Activated naive CD4-positive, alpha-beta T cell treated with anti-CD3 and anti-CD28 coated beads for 36 hours (primary cell): ENCODE measurements at regions of chr22 and their contacts with region 1.

Region 1: DNA sequence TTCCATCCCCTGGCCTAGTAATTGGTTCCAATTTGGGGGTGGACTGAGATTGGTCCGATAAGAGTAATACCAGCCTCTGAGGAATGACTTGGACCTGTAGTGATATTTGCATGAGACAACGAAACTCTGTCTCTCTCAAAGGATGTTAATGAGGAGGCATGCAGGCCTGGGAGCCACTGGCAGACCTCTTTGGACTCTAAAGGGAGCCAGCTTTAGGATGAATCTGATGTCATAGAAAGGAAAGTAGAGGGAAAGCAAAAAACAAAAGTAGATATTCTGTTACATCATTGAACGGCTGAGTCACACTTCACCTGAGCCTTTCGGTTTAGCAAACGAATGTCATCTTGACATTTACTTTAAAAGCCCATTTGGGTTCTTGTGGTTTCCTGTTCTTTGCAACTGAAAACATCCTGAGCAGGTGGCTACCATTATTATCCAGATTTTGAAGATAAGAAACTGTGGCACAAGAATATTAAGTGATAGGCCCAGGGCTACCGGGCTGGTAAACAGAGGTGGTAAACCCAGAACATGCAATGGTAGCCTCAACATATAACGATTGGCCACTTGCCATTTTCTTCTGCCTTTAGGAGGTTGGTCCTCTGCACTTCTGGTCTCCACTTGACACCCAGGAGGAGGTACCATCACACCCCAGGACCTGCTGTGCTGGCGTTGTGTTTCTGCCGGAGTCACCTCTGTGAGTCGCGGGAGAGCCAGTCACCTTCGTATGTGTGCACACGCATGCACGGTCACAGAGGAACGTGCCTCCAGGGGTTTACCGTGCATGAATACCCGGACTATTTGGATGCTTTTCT is 42.7 kb downstream of the RTL6 start:
- DNase-seq: peak; percentile 57
- H3K4me3 Mint-ChIP-seq: peak overlapping the region; percentile 27
- H3K27ac Mint-ChIP-seq: peak overlapping the region; percentile 80
- H3K4me1 Mint-ChIP-seq: peaks cover 27% of the 10 kb centered on the region
- H3K27me3 Mint-ChIP-seq: no peaks in the 10 kb centered on the region

Region 2: GRCh38 chr22:44107340-44107739 is 348.0 kb before region 1 on chr22:
- CTCF ChIA-PET with region 1: no interaction called
- intact Hi-C with region 1: no loop called
- DNase-seq: peak; percentile 11
- H3K4me3 Mint-ChIP-seq: no peak overlapping the region
- H3K27ac Mint-ChIP-seq: no peak overlapping the region
- H3K4me1 Mint-ChIP-seq: no peaks in the 10 kb centered on the region
- H3K27me3 Mint-ChIP-seq: no peaks in the 10 kb centered on the region

Region 3: DNA sequence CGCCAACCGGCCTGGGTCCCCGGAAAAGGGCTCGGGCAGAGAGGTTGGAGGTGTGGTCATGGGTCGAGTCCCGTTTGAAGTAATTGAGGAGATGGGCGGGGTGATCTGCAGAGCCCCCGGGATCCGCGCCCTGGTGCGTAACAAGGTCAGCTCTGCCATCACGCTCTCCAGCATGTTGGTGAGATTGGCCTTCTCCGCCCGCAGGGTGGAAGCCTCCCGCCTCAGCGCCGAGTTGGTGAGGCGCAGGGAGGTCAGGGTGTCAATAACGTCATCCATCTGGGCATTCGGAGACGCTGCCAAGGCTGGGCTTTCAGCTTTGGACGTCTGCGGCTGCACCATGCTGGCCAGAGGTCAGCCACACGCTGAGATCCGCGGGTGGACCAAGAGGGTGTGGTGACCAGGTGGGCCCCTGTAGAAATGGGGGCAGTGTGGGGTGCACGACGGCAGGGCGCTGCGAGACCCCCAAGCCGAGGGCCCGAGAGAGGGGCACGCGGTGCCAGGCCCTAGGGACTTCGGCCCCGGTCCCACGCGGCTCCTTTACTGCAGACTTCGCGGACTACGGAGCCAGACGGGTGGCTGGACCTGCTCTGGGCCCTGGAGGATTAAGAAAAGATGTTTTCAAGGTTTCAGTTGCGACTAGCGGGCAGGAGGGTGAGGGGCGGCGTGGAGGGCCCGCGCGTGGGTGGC is 42.0 kb after region 1 on chr22:
- CTCF ChIA-PET with region 1: no interaction called
- intact Hi-C with region 1: loop called (anchors 1 kb)
- DNase-seq: no peak
- H3K4me3 Mint-ChIP-seq: peak overlapping the region; percentile 69
- H3K27ac Mint-ChIP-seq: no peak overlapping the region
- H3K4me1 Mint-ChIP-seq: peaks cover 24% of the 10 kb centered on the region
- H3K27me3 Mint-ChIP-seq: no peaks in the 10 kb centered on the region

Region 4: DNA sequence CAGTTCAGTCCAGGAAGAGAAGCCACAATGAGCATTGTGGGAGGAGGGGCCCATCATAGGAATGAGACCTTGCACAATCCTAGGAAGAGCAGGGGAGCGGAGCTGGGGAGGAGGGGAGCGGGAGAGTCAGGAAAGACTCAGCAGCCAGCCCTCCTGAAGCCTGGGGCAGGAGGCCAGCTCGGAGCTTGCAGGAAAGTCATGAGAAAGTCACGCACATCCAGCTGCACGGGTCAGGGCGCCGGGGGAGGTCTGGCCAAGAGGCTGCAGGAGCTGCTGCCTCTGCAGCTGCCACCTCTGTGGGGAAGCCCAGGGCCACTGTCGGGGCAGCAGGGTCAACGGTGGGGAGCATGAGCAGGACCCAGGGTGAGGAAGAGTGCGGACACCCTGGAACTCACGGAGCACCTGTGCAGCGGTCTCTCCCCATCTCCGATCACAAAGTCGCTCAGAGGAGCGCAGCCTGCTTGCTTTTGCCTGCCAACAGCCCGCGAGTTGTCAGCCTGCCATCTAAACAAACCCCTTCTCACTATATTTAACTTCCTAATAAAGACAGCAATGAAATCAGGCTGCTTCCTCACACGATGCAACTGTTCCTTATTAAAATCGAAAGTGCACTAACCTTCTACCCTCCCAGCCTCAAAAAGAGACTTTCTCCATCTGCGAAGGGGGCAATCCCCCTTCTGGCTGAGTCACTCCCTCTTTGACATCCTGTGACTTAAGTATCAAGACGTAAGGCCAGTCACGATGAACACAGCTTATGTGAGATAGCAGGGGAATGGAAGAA is 95.5 kb after region 1 on chr22:
- CTCF ChIA-PET with region 1: no interaction called
- intact Hi-C with region 1: loop called (anchors 1 kb)
- DNase-seq: peak; percentile 72
- H3K4me3 Mint-ChIP-seq: no peak overlapping the region
- H3K27ac Mint-ChIP-seq: peak overlapping the region; percentile 28
- H3K4me1 Mint-ChIP-seq: peaks cover 9% of the 10 kb centered on the region
- H3K27me3 Mint-ChIP-seq: peaks cover 8% of the 10 kb centered on the region

Region 5: DNA sequence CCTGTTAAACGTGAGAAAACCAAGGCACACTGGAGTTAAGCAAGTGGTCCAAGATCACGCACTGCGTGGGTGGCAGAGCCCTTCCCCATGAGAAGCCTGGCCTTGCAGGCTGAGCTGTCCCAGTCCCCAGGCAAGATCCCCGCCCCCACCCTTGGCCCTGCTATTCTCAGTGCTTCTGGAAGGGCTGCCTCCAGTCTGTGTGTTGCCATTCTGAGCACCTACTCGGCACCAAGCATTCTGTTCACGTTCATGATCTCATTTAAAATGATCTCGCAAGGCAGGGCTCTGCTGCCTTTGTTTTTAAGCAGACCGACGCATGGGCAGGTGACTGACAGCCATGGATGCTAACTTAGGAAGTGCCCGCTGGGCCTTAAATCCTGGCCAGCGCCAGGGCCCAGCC is 491.7 kb after region 1 on chr22:
- CTCF ChIA-PET with region 1: no interaction called
- intact Hi-C with region 1: no loop called
- DNase-seq: no peak
- H3K4me3 Mint-ChIP-seq: no peak overlapping the region
- H3K27ac Mint-ChIP-seq: no peak overlapping the region
- H3K4me1 Mint-ChIP-seq: no peaks in the 10 kb centered on the region
- H3K27me3 Mint-ChIP-seq: no peaks in the 10 kb centered on the region